A549 (cell line): ENCODE measurements at regions of chr19 and their contacts with region 1.

Region 1: GRCh38 chr19:40489882-40490230 is 23.1 kb downstream of the SPTBN4 start:
- DNase-seq: no peak
- ATAC-seq: peak in 1 of 2 experiments; percentile 2; a peak in 1 of 6 replicates
- H3K4me3 ChIP-seq: no peak overlapping the region
- H3K27ac ChIP-seq: no peak overlapping the region
- H3K4me1 ChIP-seq: 0 out of 3 replicates have a peak, but pooled peaks cover 6% of the 10 kb centered on the region
- CTCF ChIP-seq: no peak
- EP300 ChIP-seq: no peak
- POLR2A ChIP-seq: no peak
- RAD21 ChIP-seq: no peak

Region 2: DNA sequence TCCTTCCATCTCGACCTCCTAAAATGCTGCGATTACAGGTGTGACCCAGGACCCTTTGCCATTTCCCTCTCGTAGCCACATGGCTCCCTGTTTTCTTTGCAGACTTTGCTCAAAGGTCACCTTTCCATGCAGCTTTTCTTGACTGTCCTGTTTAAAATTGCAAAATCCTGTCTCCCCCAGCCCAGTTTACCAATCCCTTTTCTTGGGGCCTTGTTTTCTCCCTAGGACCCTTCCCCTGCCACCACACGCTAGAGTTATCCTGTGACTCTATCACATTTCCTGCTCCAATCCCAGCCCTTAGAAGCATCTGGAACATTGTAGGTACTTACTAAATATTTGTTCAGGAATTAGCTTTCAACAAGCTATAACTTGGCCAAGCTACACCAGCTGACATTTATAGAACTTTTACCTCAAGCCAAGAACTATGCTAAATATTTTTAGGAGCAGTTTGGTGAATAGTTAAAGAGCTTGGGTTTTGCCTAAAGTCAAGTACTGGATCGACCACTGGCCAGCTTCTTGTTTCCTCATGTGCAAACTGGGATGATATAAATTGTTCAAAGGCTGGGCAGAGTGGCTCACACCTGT is 36.6 kb before region 1 on chr19:
- CTCF ChIA-PET with region 1: no interaction called
- POLR2A ChIA-PET with region 1: no interaction called
- DNase-seq: no peak
- ATAC-seq: no peak
- H3K4me3 ChIP-seq: no peak overlapping the region
- H3K27ac ChIP-seq: no peak overlapping the region
- H3K4me1 ChIP-seq: no peaks in the 10 kb centered on the region
- CTCF ChIP-seq: no peak
- EP300 ChIP-seq: no peak
- POLR2A ChIP-seq: no peak
- RAD21 ChIP-seq: no peak

Region 3: DNA sequence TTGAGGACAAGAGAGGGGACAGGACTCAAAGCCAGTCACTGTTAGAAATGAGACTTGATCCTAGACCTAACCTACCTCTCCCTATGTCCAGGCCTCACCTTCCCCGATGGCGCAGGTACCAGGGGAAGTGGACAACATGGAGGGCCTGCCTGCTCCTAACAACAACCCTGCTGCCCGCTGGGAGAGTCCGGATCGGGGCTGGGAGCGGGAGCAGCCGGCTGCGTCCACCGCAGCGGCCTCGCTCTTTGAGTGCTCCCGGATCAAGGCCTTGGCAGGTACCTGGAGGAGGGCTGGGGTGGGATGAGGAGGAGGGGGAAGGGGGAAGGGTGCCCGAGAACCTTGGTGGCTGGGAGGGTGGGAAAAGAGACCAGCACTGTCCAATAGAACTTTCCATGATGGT is 17.3 kb before region 1 on chr19:
- CTCF ChIA-PET with region 1: interaction called, 13 read pairs
- POLR2A ChIA-PET with region 1: interaction called, 3 read pairs
- DNase-seq: no peak
- ATAC-seq: 0 out of 6 replicates have a peak, but pooled peaks of 1 of the 2 experiments have one; percentile 12
- H3K4me3 ChIP-seq: no peak overlapping the region
- H3K27ac ChIP-seq: no peak overlapping the region
- H3K4me1 ChIP-seq: no peaks in the 10 kb centered on the region
- CTCF ChIP-seq: no peak
- EP300 ChIP-seq: no peak
- POLR2A ChIP-seq: no peak
- RAD21 ChIP-seq: no peak

Region 4: DNA sequence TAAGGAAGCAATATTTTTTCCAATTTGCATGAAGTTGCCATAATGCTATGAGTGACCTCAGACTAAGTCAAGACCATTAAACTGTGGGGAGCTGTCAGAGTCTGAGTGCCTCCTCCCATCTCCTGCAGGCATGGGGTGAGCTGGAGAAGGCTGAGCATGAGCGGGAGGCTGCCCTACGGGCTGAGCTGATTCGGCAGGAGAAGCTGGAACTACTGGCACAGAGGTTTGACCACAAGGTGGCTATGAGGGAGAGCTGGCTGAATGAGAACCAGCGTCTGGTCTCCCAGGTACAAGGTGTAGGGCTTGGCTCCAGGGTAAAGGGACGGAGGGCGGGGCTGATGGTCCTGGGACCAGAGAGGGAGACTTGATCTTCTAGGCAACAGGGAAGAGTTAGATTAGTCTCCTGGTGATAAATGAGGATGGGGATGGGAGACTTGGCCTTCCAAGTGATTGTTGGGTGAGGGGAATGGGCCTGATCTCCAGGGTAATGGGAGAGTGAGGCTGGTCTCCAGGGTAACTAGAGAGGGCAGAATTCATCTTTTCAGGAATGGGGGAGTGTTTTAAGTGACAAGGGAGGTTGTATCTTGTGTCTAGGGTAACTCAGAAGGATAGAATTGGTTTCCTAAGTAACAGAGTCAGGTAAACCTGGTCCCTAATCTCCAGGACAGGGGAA is 12.9 kb after region 1 on chr19:
- CTCF ChIA-PET with region 1: interaction called, 25 read pairs
- POLR2A ChIA-PET with region 1: interaction called, 4 read pairs
- DNase-seq: peak; percentile 58 to 76
- ATAC-seq: peak; percentile 79 to 89
- H3K4me3 ChIP-seq: no peak overlapping the region
- H3K27ac ChIP-seq: no peak overlapping the region
- H3K4me1 ChIP-seq: no peaks in the 10 kb centered on the region
- CTCF ChIP-seq: 0 out of 3 replicates have a peak, but pooled peaks have one; percentile 31
- EP300 ChIP-seq: no peak
- POLR2A ChIP-seq: no peak
- RAD21 ChIP-seq: peak in 1 of 2 experiments; percentile 42; a peak in 2 of 5 replicates

Region 5: GRCh38 chr19:40529093-40529954 is 39.5 kb after region 1 on chr19:
- CTCF ChIA-PET with region 1: interaction called, 10 read pairs
- POLR2A ChIA-PET with region 1: no interaction called
- DNase-seq: peak; percentile 94 to 100
- ATAC-seq: peak; percentile 37 to 78
- H3K4me3 ChIP-seq: peak overlapping the region; percentile 50
- H3K27ac ChIP-seq: peak overlapping the region; percentile 55 to 79
- H3K4me1 ChIP-seq: peaks cover 18% of the 10 kb centered on the region
- CTCF ChIP-seq: peak; percentile 99
- EP300 ChIP-seq: 0 out of 5 replicates have a peak, but pooled peaks of 1 of the 2 experiments have one; percentile 17
- POLR2A ChIP-seq: no peak
- RAD21 ChIP-seq: peak; percentile 43 to 72; a peak in 4 of 5 replicates